ENCODE measurements at regions of chr22 and their contacts with region 1.

Region 1: GRCh38 chr22:46006379-46007002 is 29.5 kb upstream of the WNT7B start:
- DNase-seq: peak; percentile 96 to 98 (median 98)
- ATAC-seq: peak; percentile 69 to 75
- H3K4me3 ChIP-seq: no peak overlapping the region
- H3K27ac ChIP-seq: peak overlapping the region; percentile 88
- H3K4me1 ChIP-seq: peaks cover 7% of the 10 kb centered on the region
- H3K27me3 ChIP-seq: no peaks in the 10 kb centered on the region

Region 2: DNA sequence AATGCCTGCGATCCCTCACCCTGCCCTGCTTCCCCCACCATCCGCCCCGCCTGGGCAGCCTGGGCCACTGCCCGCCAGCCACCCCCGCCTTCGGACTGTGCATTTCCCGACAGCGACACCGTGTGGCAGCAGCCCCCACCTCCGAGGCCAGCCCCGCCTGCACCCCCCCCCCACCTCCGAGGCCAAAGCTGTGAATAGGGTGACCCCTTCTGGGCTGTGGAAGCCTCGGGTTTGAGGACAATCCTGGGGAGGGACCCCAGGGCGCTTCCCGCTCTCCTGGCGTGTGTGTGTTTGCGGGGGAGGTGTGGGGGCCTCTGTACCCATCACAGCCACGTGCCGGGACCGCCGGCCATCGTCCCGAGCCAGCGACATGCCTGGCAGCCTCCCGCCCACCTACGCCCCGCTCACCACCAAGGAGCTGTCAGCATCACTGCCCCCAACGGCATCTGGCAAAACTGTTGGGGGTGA is 110.0 kb after region 1 on chr22:
- intact Hi-C with region 1: loop called in 2 of 4 experiments (anchors 2 to 5 kb)
- DNase-seq: peak; percentile 95 to 99 (median 98)
- ATAC-seq: peak; percentile 74 to 75
- H3K4me3 ChIP-seq: no peak overlapping the region
- H3K27ac ChIP-seq: peak overlapping the region; percentile 16
- H3K4me1 ChIP-seq: peaks cover 5% of the 10 kb centered on the region
- H3K27me3 ChIP-seq: no peaks in the 10 kb centered on the region

Region 3: GRCh38 chr22:46296257-46297150 is 290.0 kb after region 1 on chr22 and contains the start of gene GTSE1:
- intact Hi-C with region 1: loop called in 1 of 4 experiments (anchors 10 kb)
- DNase-seq: peak; percentile 99 to 100 (median 99)
- ATAC-seq: peak; percentile 97 to 98
- H3K4me3 ChIP-seq: peak within 1 kb of the TSS; percentile 41
- H3K27ac ChIP-seq: peak within 1 kb of the TSS; percentile 91
- H3K4me1 ChIP-seq: peaks cover 5% of the 10 kb centered on the region
- H3K27me3 ChIP-seq: no peaks in the 10 kb centered on the region
- total RNA-seq, gene GTSE1: 0.42 to 1.8 (median 1.2) TPM

Measured in right cardiac atrium (tissue), 5 donors.